ENCODE measurements at regions of chr9 and their contacts with region 1.

Region 1: GRCh38 chr9:11328326-11328725 is 715.5 kb upstream of the PTPRD start:
- DNase-seq: no peak
- ATAC-seq: no peak
- H3K4me3 ChIP-seq: no peak overlapping the region
- H3K27ac ChIP-seq: no peak overlapping the region
- H3K4me1 ChIP-seq: no peaks in the 10 kb centered on the region
- H3K27me3 ChIP-seq: no peaks in the 10 kb centered on the region
- CTCF ChIP-seq: no peak
- POLR2A ChIP-seq: no peak

Region 2: GRCh38 chr9:10855852-10856251 is 472.5 kb before region 1 on chr9:
- intact Hi-C with region 1: no loop called
- DNase-seq: no peak
- ATAC-seq: no peak
- H3K4me3 ChIP-seq: no peak overlapping the region
- H3K27ac ChIP-seq: no peak overlapping the region
- H3K4me1 ChIP-seq: no peaks in the 10 kb centered on the region
- H3K27me3 ChIP-seq: no peaks in the 10 kb centered on the region
- CTCF ChIP-seq: peak in 5 of 12 donors; percentile 11 to 26 (median 21)
- POLR2A ChIP-seq: no peak

Region 3: GRCh38 chr9:11275158-11275695 is 53.1 kb before region 1 on chr9:
- intact Hi-C with region 1: no loop called
- DNase-seq: no peak
- ATAC-seq: no peak
- H3K4me3 ChIP-seq: no peak overlapping the region
- H3K27ac ChIP-seq: no peak overlapping the region
- H3K4me1 ChIP-seq: no peaks in the 10 kb centered on the region
- H3K27me3 ChIP-seq: no peaks in the 10 kb centered on the region
- CTCF ChIP-seq: no peak
- POLR2A ChIP-seq: no peak

Region 4: GRCh38 chr9:11374926-11375325 is 46.6 kb after region 1 on chr9:
- intact Hi-C with region 1: loop called in 1 of 10 experiments (anchors 10 kb)
- DNase-seq: no peak
- ATAC-seq: no peak
- H3K4me3 ChIP-seq: no peak overlapping the region
- H3K27ac ChIP-seq: no peak overlapping the region
- H3K4me1 ChIP-seq: no peaks in the 10 kb centered on the region
- H3K27me3 ChIP-seq: no peaks in the 10 kb centered on the region
- CTCF ChIP-seq: no peak
- POLR2A ChIP-seq: no peak

Region 5: DNA sequence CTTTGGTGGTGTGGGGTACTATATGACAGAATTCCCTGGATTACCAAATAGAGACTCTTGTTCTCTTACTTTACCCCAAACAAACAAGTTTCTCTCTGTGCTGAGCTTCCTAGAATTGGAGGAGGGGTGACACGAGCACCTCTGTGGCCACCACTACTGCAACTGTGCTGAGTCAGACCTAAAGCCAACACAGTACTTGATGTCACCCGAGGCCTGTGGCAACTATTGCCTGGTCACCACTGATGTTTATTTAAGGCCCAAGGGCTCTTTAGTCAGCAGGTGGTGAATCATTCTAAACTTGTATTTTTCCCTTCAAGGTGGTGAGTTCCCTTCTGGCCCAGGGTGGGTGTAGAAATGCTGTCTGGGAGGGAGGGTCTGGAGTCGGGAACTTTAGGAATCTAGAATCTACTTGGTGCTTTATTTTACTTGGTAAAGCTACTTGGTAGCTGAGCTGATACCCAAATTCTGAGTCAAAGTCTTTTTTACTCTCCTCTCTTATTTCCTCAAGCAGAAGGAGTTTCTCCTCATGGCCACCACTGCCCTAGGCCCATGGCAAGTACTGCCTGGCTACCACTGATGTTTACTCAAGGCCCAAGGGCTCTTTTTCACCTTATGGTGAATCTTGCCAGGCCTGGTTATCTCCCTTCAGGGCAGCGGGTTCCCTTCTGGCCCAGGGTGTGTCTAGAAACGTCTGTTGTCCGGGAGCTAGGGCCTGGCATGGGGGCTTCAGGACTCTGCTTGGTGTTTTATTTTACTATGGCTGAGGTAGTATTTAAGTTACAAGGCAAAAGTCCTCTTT is 1456.3 kb after region 1 on chr9:
- intact Hi-C with region 1: no loop called
- DNase-seq: no peak
- ATAC-seq: peak in 1 of 4 donors; percentile 53
- H3K4me3 ChIP-seq: no peak overlapping the region
- H3K27ac ChIP-seq: peak overlapping the region in 2 of 12 donors; percentile 31 to 82
- H3K4me1 ChIP-seq: peaks cover 0 to 11% (median 3%) of the 10 kb centered on the region in 12 donors
- H3K27me3 ChIP-seq: no peaks in the 10 kb centered on the region
- CTCF ChIP-seq: no peak
- POLR2A ChIP-seq: no peak

Measured in heart left ventricle (tissue), 16 donors.